ENCODE measurements at regions of chr6 and their contacts with region 1.

Region 1: GRCh38 chr6:37566111-37566949 is 66.6 kb upstream of the CCDC167 start:
- DNase-seq: peak; percentile 52 to 96 (median 76)

Region 2: DNA sequence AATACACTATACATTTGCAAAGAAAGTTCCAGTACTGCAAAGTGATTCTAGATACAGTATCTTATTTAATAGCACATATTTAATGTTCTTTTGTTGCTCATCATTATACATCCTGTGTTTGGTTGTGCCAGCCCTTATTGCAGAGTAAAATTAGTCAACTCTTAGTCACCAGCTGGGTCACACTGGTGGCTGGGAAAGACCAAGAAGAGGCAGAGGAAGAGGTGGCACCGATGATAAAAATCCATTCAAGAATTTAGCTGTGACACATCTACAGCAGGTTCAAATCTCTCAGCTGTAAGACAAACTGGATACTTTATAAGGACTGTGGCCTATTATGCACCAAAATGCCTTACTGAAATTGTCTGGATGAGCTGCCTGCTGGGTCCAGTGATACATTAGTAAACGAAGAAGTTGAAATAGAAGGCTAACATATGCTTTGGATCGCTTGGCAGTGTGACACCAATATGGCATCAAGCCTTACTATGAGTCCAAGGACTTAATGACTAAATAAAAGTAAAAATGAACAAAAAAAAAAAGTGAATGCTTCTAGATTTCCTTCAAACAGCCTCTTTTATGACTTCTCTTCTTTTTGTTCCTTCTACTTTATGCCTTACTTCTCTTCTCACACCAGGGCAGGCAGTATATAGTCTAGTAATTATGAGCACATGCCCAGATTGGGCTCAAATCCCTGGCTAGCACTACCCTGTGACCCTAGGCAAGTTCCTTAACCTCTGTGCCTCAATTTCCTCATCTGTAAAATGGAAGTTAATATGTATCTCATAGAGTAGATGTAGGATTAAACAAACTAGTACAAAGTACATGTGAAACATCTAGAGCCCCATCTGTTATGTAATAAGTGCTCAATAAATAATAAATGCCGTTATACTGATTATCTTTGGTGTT is 241.9 kb before region 1 on chr6:
- intact Hi-C with region 1: loop called (anchors 5 kb)
- DNase-seq: no peak

Region 3: GRCh38 chr6:37369321-37370201 is 196.8 kb before region 1 on chr6:
- intact Hi-C with region 1: loop called (anchors 10 kb)
- DNase-seq: no peak

Region 4: GRCh38 chr6:37483917-37484785 is 82.2 kb before region 1 on chr6:
- intact Hi-C with region 1: loop called (anchors 2 kb)
- DNase-seq: peak; percentile 53 to 96 (median 76)

Region 5: GRCh38 chr6:37587866-37588734 is 21.8 kb after region 1 on chr6:
- intact Hi-C with region 1: no loop called
- DNase-seq: peak in 2 of 10 donors; percentile 20 to 22

Region 6: GRCh38 chr6:37691904-37692806 is 125.8 kb after region 1 on chr6:
- intact Hi-C with region 1: loop called (anchors 5 kb)
- DNase-seq: peak; percentile 65 to 97 (median 87)

Region 7: GRCh38 chr6:37725957-37726356 is 159.6 kb after region 1 on chr6:
- intact Hi-C with region 1: no loop called
- DNase-seq: no peak